ENCODE measurements at regions of chr1 and their contacts with region 1.

Region 1: GRCh38 chr1:25624156-25624555 is 7.6 kb downstream of the MAN1C1 start:
- DNase-seq: no peak
- H3K4me3 ChIP-seq: no peak overlapping the region
- H3K27ac ChIP-seq: no peak overlapping the region
- H3K4me1 ChIP-seq: peaks cover 9% of the 10 kb centered on the region
- H3K27me3 ChIP-seq: no peaks in the 10 kb centered on the region
- CTCF ChIP-seq: no peak
- EP300 ChIP-seq: no peak
- POLR2A ChIP-seq: no peak

Region 2: DNA sequence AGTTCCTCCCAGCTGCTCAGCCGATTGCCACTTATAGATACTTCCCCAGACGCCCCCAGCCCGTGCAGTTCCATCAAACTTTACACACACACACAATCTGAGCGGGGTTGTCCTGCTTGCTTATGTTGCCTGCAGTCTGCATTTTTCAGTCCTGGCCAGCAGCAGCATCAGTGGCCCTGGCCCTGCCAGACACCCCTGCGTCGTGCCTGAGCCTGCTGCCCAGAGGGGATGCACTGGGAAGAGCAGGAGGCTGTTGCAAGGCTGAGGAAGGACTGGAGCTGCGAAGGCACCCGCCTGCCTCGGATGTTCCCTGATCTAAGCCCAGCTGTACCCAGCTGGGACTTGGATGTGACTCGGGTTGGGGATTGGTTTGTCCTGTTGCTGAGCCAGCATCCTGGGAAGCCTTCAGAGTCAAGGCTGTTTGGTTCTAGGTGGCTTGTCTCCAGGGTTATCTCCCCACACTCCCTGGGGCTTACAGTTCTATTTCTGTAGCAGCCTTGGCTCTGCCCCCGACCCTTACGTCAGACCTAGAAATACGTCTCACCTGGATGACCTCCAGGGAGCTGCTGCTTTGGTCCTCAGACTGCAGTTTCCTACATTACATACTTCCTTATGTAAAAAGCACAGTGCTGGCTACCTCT is 34.8 kb after region 1 on chr1:
- intact Hi-C with region 1: loop called in 1 of 4 experiments (anchors 5 kb)
- DNase-seq: peak; percentile 74 to 83 (median 77)
- H3K4me3 ChIP-seq: no peak overlapping the region
- H3K27ac ChIP-seq: peak overlapping the region in 1 of 2 donors; percentile 57
- H3K4me1 ChIP-seq: peaks cover 19% of the 10 kb centered on the region
- H3K27me3 ChIP-seq: no peaks in the 10 kb centered on the region
- CTCF ChIP-seq: no peak
- EP300 ChIP-seq: no peak
- POLR2A ChIP-seq: no peak

Region 3: GRCh38 chr1:25688390-25689161 is 64.4 kb after region 1 on chr1:
- intact Hi-C with region 1: loop called in 1 of 4 experiments (anchors 10 kb)
- DNase-seq: no peak
- H3K4me3 ChIP-seq: no peak overlapping the region
- H3K27ac ChIP-seq: no peak overlapping the region
- H3K4me1 ChIP-seq: peaks cover 20% of the 10 kb centered on the region
- H3K27me3 ChIP-seq: no peaks in the 10 kb centered on the region
- CTCF ChIP-seq: no peak
- EP300 ChIP-seq: no peak
- POLR2A ChIP-seq: no peak

Region 4: GRCh38 chr1:25837262-25837875 is 213.2 kb after region 1 on chr1:
- intact Hi-C with region 1: no loop called
- DNase-seq: no peak
- H3K4me3 ChIP-seq: no peak overlapping the region
- H3K27ac ChIP-seq: no peak overlapping the region
- H3K4me1 ChIP-seq: peaks cover 2% of the 10 kb centered on the region
- H3K27me3 ChIP-seq: no peaks in the 10 kb centered on the region
- CTCF ChIP-seq: no peak
- EP300 ChIP-seq: no peak
- POLR2A ChIP-seq: no peak

Measured in ovary (tissue), 10 donors.